CD4-positive, alpha-beta T cell (primary cell): ENCODE measurements at regions of chr6 and their contacts with region 1.

Region 1: GRCh38 chr6:137823826-137824555 is 43.1 kb upstream of the TNFAIP3 start:
- DNase-seq: peak; percentile 43 to 98 (median 76)
- ATAC-seq: peak; percentile 71
- H3K4me3 ChIP-seq: peak overlapping the region; percentile 21
- H3K4me3 Mint-ChIP-seq: peak overlapping the region; percentile 69
- H3K27ac ChIP-seq: peak overlapping the region; percentile 93 to 94
- H3K27ac Mint-ChIP-seq: peak overlapping the region; percentile 96
- H3K4me1 ChIP-seq: peaks cover 53% of the 10 kb centered on the region
- H3K4me1 Mint-ChIP-seq: peaks cover 70% of the 10 kb centered on the region
- H3K27me3 ChIP-seq: no peaks in the 10 kb centered on the region
- H3K27me3 Mint-ChIP-seq: no peaks in the 10 kb centered on the region
- CTCF ChIP-seq: no peak

Region 2: GRCh38 chr6:137717074-137718073 is 106.6 kb before region 1 on chr6:
- CTCF ChIA-PET with region 1: no interaction called
- POLR2A ChIA-PET with region 1: interaction called, 7 read pairs
- intact Hi-C with region 1: loop called in 1 of 2 experiments (anchors 1 kb)
- DNase-seq: peak; percentile 48 to 96 (median 70)
- ATAC-seq: peak; percentile 52
- H3K4me3 ChIP-seq: no peak overlapping the region
- H3K4me3 Mint-ChIP-seq: peak overlapping the region; percentile 71
- H3K27ac ChIP-seq: peak overlapping the region; percentile 59 to 72
- H3K27ac Mint-ChIP-seq: peak overlapping the region; percentile 91
- H3K4me1 ChIP-seq: peaks cover 23% of the 10 kb centered on the region
- H3K4me1 Mint-ChIP-seq: peaks cover 46% of the 10 kb centered on the region
- H3K27me3 ChIP-seq: no peaks in the 10 kb centered on the region
- H3K27me3 Mint-ChIP-seq: no peaks in the 10 kb centered on the region
- CTCF ChIP-seq: no peak

Region 3: GRCh38 chr6:137811121-137811915 is 12.7 kb before region 1 on chr6:
- CTCF ChIA-PET with region 1: interaction called, 6 read pairs
- POLR2A ChIA-PET with region 1: interaction called, 9 read pairs
- intact Hi-C with region 1: loop called in 1 of 2 experiments (anchors 1 kb)
- DNase-seq: peak; percentile 55 to 97 (median 68)
- ATAC-seq: peak; percentile 95
- H3K4me3 ChIP-seq: peak overlapping the region; percentile 5
- H3K4me3 Mint-ChIP-seq: peak overlapping the region; percentile 78
- H3K27ac ChIP-seq: peak overlapping the region; percentile 62 to 83
- H3K27ac Mint-ChIP-seq: peak overlapping the region; percentile 74
- H3K4me1 ChIP-seq: peaks cover 26% of the 10 kb centered on the region
- H3K4me1 Mint-ChIP-seq: peaks cover 49% of the 10 kb centered on the region
- H3K27me3 ChIP-seq: no peaks in the 10 kb centered on the region
- H3K27me3 Mint-ChIP-seq: no peaks in the 10 kb centered on the region
- CTCF ChIP-seq: no peak

Region 4: GRCh38 chr6:138455746-138456400 is 631.9 kb after region 1 on chr6:
- CTCF ChIA-PET with region 1: no interaction called
- POLR2A ChIA-PET with region 1: no interaction called
- intact Hi-C with region 1: loop called in 1 of 2 experiments (anchors 5 kb)
- DNase-seq: peak in 10 of 14 experiments; percentile 2 to 84 (median 26)
- ATAC-seq: peak; percentile 74
- H3K4me3 ChIP-seq: peak overlapping the region; percentile 44
- H3K4me3 Mint-ChIP-seq: peak overlapping the region; percentile 82
- H3K27ac ChIP-seq: peak overlapping the region; percentile 43 to 58
- H3K27ac Mint-ChIP-seq: peak overlapping the region; percentile 97
- H3K4me1 ChIP-seq: peaks cover 18% of the 10 kb centered on the region
- H3K4me1 Mint-ChIP-seq: peaks cover 32% of the 10 kb centered on the region
- H3K27me3 ChIP-seq: no peaks in the 10 kb centered on the region
- H3K27me3 Mint-ChIP-seq: no peaks in the 10 kb centered on the region
- CTCF ChIP-seq: no peak